ENCODE measurements at regions of chr5 and their contacts with region 1.

Region 1: GRCh38 chr5:140244525-140245025 is 58.3 kb downstream of the PFDN1 start:
- DNase-seq: peak; percentile 93
- H3K4me3 ChIP-seq: no peak overlapping the region
- H3K27ac ChIP-seq: peak overlapping the region; percentile 54 to 83 (median 68)
- H3K4me1 ChIP-seq: peaks cover 48 to 66% (median 55%) of the 10 kb centered on the region in 4 donors
- H3K27me3 ChIP-seq: no peaks in the 10 kb centered on the region
- CTCF ChIP-seq: peak; percentile 87 to 96 (median 90)
- EP300 ChIP-seq: no peak
- POLR2A ChIP-seq: no peak

Region 2: GRCh38 chr5:140174465-140175366 is 69.9 kb before region 1 on chr5 and contains the start of gene CYSTM1:
- in situ Hi-C with region 1: no loop called
- intact Hi-C with region 1: loop called (anchors 2 kb)
- DNase-seq: peak; percentile 99
- H3K4me3 ChIP-seq: peak within 1 kb of the TSS; percentile 76 to 98 (median 90)
- H3K27ac ChIP-seq: peak within 1 kb of the TSS; percentile 97 to 100 (median 100)
- H3K4me1 ChIP-seq: peaks cover 9 to 40% (median 28%) of the 10 kb centered on the region in 4 donors
- H3K27me3 ChIP-seq: no peaks in the 10 kb centered on the region
- CTCF ChIP-seq: no peak
- EP300 ChIP-seq: peak; percentile 84
- POLR2A ChIP-seq: peak; percentile 96
- total RNA-seq, gene CYSTM1: 32.8 to 264 (median 107) TPM

Region 3: DNA sequence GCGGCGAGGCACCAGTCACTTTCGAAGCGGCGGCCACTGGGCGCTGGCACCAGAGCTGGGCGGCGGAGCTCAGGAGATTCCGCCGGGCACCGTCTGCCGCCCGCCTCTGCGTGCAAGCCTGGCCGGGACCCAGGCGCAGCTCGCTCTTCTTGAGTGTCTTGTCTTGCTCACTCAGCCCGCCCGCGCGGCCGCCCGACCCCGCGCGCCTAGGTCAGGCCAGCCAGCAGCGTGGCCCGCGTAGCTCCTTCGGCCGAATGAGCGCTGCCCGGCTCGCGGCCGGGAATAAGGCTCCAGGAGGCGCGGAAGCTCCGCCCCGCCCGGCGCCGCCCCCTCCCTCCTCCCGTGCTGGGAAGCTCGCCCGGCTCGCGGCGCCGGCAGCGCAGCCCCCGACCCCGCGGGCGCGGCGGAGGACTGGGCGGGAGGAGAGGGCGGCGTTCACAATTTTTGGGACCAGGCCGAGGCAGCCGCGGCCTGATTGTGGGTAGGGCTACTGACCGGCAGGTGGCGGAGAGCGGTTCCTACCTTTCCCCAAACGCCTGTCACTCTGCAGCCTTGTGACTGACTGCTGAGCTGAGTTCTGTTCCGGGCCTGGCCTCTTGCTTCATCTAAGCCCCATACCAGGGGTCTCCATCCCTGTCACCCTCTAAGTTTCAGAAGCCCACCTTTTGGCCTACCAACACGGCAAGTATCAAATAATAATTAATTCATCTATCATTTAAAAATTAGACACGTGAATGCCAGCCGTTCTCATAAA is 102.0 kb after region 1 on chr5 and contains the start of gene HBEGF:
- in situ Hi-C with region 1: loop called (anchors 5 kb)
- intact Hi-C with region 1: loop called (anchors 2 kb)
- DNase-seq: peak; percentile 90
- H3K4me3 ChIP-seq: peak within 1 kb of the TSS; percentile 54 to 78 (median 72)
- H3K27ac ChIP-seq: peak within 1 kb of the TSS; percentile 86 to 95 (median 90)
- H3K4me1 ChIP-seq: peaks cover 19 to 64% (median 42%) of the 10 kb centered on the region in 4 donors
- H3K27me3 ChIP-seq: no peaks in the 10 kb centered on the region
- CTCF ChIP-seq: peak in 4 of 5 experiments; percentile 38 to 49 (median 41)
- EP300 ChIP-seq: no peak
- POLR2A ChIP-seq: peak; percentile 89
- total RNA-seq, gene HBEGF: 10.5 to 40.0 (median 35.6) TPM

Region 4: DNA sequence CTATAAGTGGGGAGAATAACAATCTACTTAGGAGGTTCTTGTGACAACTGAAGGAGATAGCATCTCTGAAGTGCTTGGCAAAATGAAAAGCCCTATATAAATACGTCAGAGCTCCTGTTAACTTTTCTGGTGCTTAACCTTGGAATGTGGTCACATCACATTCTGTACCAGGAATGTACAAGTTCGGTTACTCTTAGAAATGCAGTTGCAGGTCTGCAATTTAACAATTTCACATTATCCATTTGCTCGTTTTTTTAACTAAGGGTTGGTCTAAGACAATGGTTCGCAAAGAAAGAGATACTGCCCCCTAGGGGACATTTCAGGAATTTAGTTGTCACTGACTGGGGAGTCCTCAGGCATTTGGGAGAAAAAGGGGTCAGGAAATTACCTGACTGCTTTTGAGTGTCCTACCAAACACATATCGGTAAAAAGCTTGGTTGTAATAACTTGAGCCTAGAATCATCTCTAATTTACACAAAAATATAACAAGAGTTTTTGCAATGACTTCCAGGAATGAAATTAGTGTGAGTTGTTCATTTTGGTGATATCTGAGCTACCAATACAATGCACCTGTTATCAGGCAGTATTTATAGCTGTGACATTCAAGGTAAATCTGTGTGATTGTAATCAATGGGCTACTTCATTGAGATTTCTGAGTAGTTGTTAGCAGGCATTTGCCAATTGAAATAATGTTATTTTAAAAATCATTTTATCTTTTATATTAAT is 107.2 kb after region 1 on chr5:
- in situ Hi-C with region 1: loop called (anchors 5 kb)
- intact Hi-C with region 1: loop called (anchors 2 kb)
- DNase-seq: peak; percentile 46
- H3K4me3 ChIP-seq: no peak overlapping the region
- H3K27ac ChIP-seq: no peak overlapping the region
- H3K4me1 ChIP-seq: peaks cover 19 to 39% (median 21%) of the 10 kb centered on the region in 4 donors
- H3K27me3 ChIP-seq: no peaks in the 10 kb centered on the region
- CTCF ChIP-seq: peak; percentile 86 to 95 (median 93)
- EP300 ChIP-seq: no peak
- POLR2A ChIP-seq: no peak

Region 5: GRCh38 chr5:140357726-140358093 is 113.1 kb after region 1 on chr5:
- in situ Hi-C with region 1: loop called (anchors 5 kb)
- intact Hi-C with region 1: loop called (anchors 2 kb)
- DNase-seq: peak; percentile 91
- H3K4me3 ChIP-seq: peak overlapping the region in 1 of 4 donors; percentile 11
- H3K27ac ChIP-seq: peak overlapping the region in 1 of 4 donors; percentile 47
- H3K4me1 ChIP-seq: peaks cover 0 to 17% (median 3%) of the 10 kb centered on the region in 4 donors
- H3K27me3 ChIP-seq: no peaks in the 10 kb centered on the region
- CTCF ChIP-seq: peak; percentile 89 to 94 (median 92)
- EP300 ChIP-seq: no peak
- POLR2A ChIP-seq: no peak

Region 6: DNA sequence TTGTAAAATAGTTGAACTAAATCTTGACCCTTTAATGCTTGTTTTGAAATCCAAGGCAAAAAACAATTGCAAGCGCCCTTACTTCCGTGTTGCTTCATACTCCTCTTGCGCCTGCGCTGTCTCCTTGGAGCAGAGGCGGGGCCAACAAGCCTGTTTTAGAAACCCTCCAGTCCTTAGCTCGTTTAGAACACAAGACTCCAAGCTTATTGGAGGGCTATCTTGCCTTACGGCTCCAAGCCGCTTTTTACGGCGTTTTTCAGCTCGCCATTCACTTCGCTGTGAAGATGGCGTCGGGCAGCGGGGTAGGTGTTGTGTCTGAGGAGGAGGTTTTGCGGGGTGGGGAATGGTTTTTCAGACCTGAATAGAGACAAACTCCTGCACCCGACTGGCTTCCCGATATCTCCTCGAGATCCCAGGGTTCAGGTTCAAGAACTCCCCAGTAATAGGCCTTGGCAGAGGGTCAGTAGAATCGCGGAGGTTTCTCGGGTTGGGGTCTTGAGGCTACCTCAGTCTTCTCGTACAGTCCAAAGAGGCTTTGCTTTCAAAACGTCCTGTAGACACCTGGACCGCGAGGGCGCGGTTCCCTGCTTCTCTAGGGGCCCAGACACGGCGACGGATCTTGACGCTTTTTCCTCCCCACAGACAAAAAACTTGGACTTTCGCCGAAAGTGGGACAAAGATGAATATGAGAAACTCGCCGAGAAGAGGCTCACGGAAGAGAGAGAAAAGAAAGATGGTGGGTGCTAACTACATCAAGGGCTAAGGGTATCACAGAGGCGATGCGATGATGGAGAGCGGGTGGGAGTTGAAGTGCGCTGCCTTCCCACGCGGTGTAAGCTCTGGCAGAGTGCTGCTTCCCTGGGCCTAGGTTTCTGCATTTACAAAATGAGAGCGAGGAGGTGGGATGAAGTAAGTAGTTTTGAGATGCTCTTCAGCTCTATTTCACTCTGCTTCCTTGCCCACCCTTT is 455.9 kb after region 1 on chr5 and contains the start of gene ZMAT2:
- in situ Hi-C with region 1: loop called in 1 of 4 experiments (anchors 25 kb)
- intact Hi-C with region 1: no loop called
- DNase-seq: peak; percentile 97
- H3K4me3 ChIP-seq: peak within 1 kb of the TSS; percentile 47 to 97 (median 72)
- H3K27ac ChIP-seq: peak within 1 kb of the TSS; percentile 65 to 88 (median 82)
- H3K4me1 ChIP-seq: peaks cover 0 to 18% (median 12%) of the 10 kb centered on the region in 4 donors
- H3K27me3 ChIP-seq: no peaks in the 10 kb centered on the region
- CTCF ChIP-seq: no peak
- EP300 ChIP-seq: no peak
- POLR2A ChIP-seq: peak; percentile 84
- total RNA-seq, gene ZMAT2: 6.7 to 41.3 (median 23.1) TPM